Ascending aorta (tissue), 2 donors: ENCODE measurements at regions of chr16 and their contacts with region 1.

Region 1: DNA sequence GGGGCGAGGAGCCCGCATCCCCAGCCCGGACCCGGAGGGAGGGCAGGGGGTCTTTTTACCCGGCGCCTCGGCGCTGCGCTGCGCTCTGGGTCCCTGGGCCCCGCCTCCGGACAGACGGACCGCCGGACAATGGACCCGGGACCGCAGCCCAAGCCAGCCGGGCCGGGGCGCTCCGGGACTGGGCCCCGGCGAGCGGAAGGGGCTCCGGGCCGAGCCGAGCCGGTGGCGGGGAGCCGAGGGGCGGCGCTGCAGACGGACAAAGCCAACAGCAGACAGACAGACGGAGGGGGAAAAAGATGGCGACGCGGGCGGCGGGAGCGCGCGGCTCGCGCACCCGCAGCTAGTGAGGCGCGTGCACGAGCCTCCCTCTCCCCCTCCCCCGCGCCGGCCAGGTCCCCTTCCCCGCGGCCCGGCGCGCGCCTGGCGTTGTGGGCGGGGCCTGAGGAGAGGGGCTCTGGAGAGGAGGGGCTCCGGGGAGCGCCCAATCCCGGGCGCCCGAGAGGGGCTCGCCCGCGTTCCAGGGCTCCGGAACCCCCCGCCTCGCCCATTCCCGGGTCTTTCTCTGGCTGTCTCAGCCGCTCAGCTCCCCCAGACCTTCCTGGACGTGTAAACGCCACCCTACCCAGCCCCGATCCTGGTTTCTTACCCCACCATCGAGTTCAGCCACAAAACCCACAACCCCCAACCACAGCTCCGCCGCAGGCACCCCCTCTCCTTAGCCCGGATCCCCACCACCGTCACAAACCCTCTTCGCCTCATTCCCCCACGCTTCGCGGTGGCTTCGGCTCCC is at the start of gene ZNF821:
- DNase-seq: peak in 1 of 2 donors; percentile 89
- H3K4me3 ChIP-seq: peak within 1 kb of the TSS; percentile 79 to 87
- H3K27ac ChIP-seq: peak within 1 kb of the TSS; percentile 94 to 95
- H3K4me1 ChIP-seq: peaks cover 0 to 4% of the 10 kb centered on the region in 2 donors
- H3K27me3 ChIP-seq: no peaks in the 10 kb centered on the region
- CTCF ChIP-seq: peak; percentile 16 to 45 (median 40)
- total RNA-seq, gene ZNF821: not detected

Region 2: GRCh38 chr16:71723537-71724319 is 160.3 kb before region 1 on chr16:
- intact Hi-C with region 1: loop called (anchors 1 kb)
- DNase-seq: peak; percentile 14 to 84
- H3K4me3 ChIP-seq: peak overlapping the region; percentile 87 to 94
- H3K27ac ChIP-seq: peak overlapping the region; percentile 93 to 97
- H3K4me1 ChIP-seq: peaks cover 0 to 17% of the 10 kb centered on the region in 2 donors
- H3K27me3 ChIP-seq: no peaks in the 10 kb centered on the region
- CTCF ChIP-seq: no peak

Region 3: GRCh38 chr16:71808593-71809459 is 75.2 kb before region 1 on chr16 and contains the start of gene AP1G1:
- intact Hi-C with region 1: loop called (anchors 1 kb)
- DNase-seq: peak; percentile 87 to 98
- H3K4me3 ChIP-seq: peak within 1 kb of the TSS; percentile 98 to 99
- H3K27ac ChIP-seq: peak within 1 kb of the TSS; percentile 100
- H3K4me1 ChIP-seq: peaks cover 9 to 24% of the 10 kb centered on the region in 2 donors
- H3K27me3 ChIP-seq: no peaks in the 10 kb centered on the region
- CTCF ChIP-seq: no peak
- total RNA-seq, gene AP1G1: 40.7 TPM

Region 4: GRCh38 chr16:71845639-71846430 is 38.2 kb before region 1 on chr16 and contains the start of gene ATXN1L:
- intact Hi-C with region 1: loop called (anchors 2 kb)
- DNase-seq: peak; percentile 65 to 96
- H3K4me3 ChIP-seq: peak within 1 kb of the TSS; percentile 81 to 88
- H3K27ac ChIP-seq: peak within 1 kb of the TSS; percentile 83 to 91
- H3K4me1 ChIP-seq: peaks cover 0 to 7% of the 10 kb centered on the region in 2 donors
- H3K27me3 ChIP-seq: no peaks in the 10 kb centered on the region
- CTCF ChIP-seq: no peak
- total RNA-seq, gene ATXN1L: 11.8 TPM

Region 5: GRCh38 chr16:71927383-71927782 is 43.3 kb after region 1 on chr16:
- intact Hi-C with region 1: loop called (anchors 5 kb)
- DNase-seq: peak in 1 of 2 donors; percentile 73
- H3K4me3 ChIP-seq: no peak overlapping the region
- H3K27ac ChIP-seq: peak overlapping the region; percentile 53 to 76
- H3K4me1 ChIP-seq: peaks cover 2 to 26% of the 10 kb centered on the region in 2 donors
- H3K27me3 ChIP-seq: no peaks in the 10 kb centered on the region
- CTCF ChIP-seq: no peak

Region 6: GRCh38 chr16:71961066-71962039 is 77.3 kb after region 1 on chr16:
- intact Hi-C with region 1: loop called (anchors 1 kb)
- DNase-seq: peak; percentile 46 to 91
- H3K4me3 ChIP-seq: no peak overlapping the region
- H3K27ac ChIP-seq: no peak overlapping the region
- H3K4me1 ChIP-seq: no peaks in the 10 kb centered on the region
- H3K27me3 ChIP-seq: no peaks in the 10 kb centered on the region
- CTCF ChIP-seq: peak; percentile 67 to 84 (median 81)

Region 7: GRCh38 chr16:72182976-72183375 is 298.9 kb after region 1 on chr16:
- intact Hi-C with region 1: no loop called
- DNase-seq: no peak
- H3K4me3 ChIP-seq: no peak overlapping the region
- H3K27ac ChIP-seq: no peak overlapping the region
- H3K4me1 ChIP-seq: no peaks in the 10 kb centered on the region
- H3K27me3 ChIP-seq: no peaks in the 10 kb centered on the region
- CTCF ChIP-seq: no peak